Esophagus squamous epithelium (tissue), 5 donors: ENCODE measurements at regions of chr6 and their contacts with region 1.

Region 1: GRCh38 chr6:167907837-167908681 is 81.3 kb downstream of the AFDN start:
- DNase-seq: no peak
- H3K4me3 ChIP-seq: no peak overlapping the region
- H3K27ac ChIP-seq: no peak overlapping the region
- H3K4me1 ChIP-seq: peaks cover 0 to 24% (median 0%) of the 10 kb centered on the region in 3 donors
- H3K27me3 ChIP-seq: no peaks in the 10 kb centered on the region
- CTCF ChIP-seq: peak in 5 of 6 experiments; percentile 18 to 47 (median 37)
- POLR2A ChIP-seq: no peak

Region 2: GRCh38 chr6:167855825-167856425 is 52.1 kb before region 1 on chr6:
- intact Hi-C with region 1: no loop called
- DNase-seq: no peak
- H3K4me3 ChIP-seq: no peak overlapping the region
- H3K27ac ChIP-seq: no peak overlapping the region
- H3K4me1 ChIP-seq: peaks cover 3 to 41% (median 4%) of the 10 kb centered on the region in 3 donors
- H3K27me3 ChIP-seq: no peaks in the 10 kb centered on the region
- CTCF ChIP-seq: no peak
- POLR2A ChIP-seq: no peak

Region 3: DNA sequence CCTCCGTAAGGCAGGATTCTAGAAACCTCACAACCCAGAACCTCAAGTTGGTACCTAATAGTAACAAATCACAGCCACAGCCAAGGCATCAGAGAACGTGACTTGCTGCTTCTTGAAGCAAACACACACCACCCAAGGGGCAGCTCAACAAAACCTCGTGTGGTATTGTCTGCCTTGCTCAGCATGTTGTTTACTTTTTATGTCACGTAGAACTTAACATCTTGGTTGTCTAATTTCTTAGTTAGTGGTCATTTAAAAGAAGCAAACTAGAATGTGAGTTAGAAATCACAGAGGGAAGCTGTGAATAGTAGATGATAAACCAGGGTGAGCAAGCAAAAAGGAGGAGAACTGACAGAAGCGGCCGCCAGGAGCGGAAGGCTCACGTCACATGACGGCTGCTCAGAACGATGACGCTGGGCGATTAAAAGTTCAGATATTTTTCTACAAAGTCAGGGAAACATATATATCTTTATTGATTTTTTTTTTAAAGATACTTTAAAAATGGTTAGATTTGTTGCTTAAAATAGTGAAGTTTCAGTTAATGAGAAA is 38.0 kb after region 1 on chr6:
- intact Hi-C with region 1: no loop called
- DNase-seq: no peak
- H3K4me3 ChIP-seq: no peak overlapping the region
- H3K27ac ChIP-seq: no peak overlapping the region
- H3K4me1 ChIP-seq: no peaks in the 10 kb centered on the region
- H3K27me3 ChIP-seq: no peaks in the 10 kb centered on the region
- CTCF ChIP-seq: no peak
- POLR2A ChIP-seq: no peak

Region 4: GRCh38 chr6:168132531-168133167 is 224.6 kb after region 1 on chr6:
- intact Hi-C with region 1: loop called (anchors 10 kb)
- DNase-seq: no peak
- H3K4me3 ChIP-seq: peak overlapping the region in 3 of 4 donors; percentile 13 to 51 (median 13)
- H3K27ac ChIP-seq: peak overlapping the region in 1 of 4 donors; percentile 46
- H3K4me1 ChIP-seq: peaks cover 0 to 16% (median 0%) of the 10 kb centered on the region in 3 donors
- H3K27me3 ChIP-seq: peaks cover 0 to 31% (median 0%) of the 10 kb centered on the region in 4 donors
- CTCF ChIP-seq: peak in 5 of 6 experiments; percentile 20 to 49 (median 34)
- POLR2A ChIP-seq: no peak